ENCODE measurements at regions of chr1 and their contacts with region 1.

Region 1: GRCh38 chr1:209565759-209566678 is 17.5 kb upstream of the CAMK1G start:
- DNase-seq: peak; percentile 75 to 92
- H3K4me3 ChIP-seq: no peak overlapping the region
- H3K27ac ChIP-seq: no peak overlapping the region
- H3K4me1 ChIP-seq: peaks cover 0 to 4% (median 2%) of the 10 kb centered on the region in 4 experiments; a peak in 4 of 7 replicates
- H3K27me3 ChIP-seq: no peaks in the 10 kb centered on the region; a peak in 1 of 7 replicates
- CTCF ChIP-seq: peak; percentile 65 to 88 (median 76)
- EP300 ChIP-seq: no peak
- POLR2A ChIP-seq: no peak
- RAD21 ChIP-seq: peak; percentile 82 to 88

Region 2: DNA sequence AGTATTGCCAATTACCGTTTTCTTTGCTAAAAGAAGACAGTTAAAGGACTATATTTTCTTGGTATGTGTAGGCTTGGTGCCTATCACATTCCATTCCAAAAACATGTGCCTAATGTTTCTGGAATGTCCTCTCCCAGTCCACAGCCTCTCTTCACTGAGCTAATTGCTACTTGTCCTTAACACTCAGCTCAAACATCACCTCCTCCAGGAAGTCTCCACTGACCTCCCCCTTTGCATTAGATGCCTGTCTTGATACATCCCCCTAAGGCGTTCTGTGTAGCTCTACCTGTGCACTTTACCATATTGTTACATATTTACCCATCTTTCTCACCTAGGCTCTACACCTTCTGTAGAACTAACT is 178.1 kb before region 1 on chr1:
- CTCF ChIA-PET with region 1: no interaction called
- POLR2A ChIA-PET with region 1: no interaction called
- DNase-seq: no peak
- H3K4me3 ChIP-seq: no peak overlapping the region
- H3K27ac ChIP-seq: no peak overlapping the region
- H3K4me1 ChIP-seq: peaks cover 3 to 18% (median 13%) of the 10 kb centered on the region in 4 experiments; a peak in 3 of 7 replicates
- H3K27me3 ChIP-seq: no peaks in the 10 kb centered on the region
- CTCF ChIP-seq: no peak
- EP300 ChIP-seq: no peak
- POLR2A ChIP-seq: no peak
- RAD21 ChIP-seq: no peak

Region 3: DNA sequence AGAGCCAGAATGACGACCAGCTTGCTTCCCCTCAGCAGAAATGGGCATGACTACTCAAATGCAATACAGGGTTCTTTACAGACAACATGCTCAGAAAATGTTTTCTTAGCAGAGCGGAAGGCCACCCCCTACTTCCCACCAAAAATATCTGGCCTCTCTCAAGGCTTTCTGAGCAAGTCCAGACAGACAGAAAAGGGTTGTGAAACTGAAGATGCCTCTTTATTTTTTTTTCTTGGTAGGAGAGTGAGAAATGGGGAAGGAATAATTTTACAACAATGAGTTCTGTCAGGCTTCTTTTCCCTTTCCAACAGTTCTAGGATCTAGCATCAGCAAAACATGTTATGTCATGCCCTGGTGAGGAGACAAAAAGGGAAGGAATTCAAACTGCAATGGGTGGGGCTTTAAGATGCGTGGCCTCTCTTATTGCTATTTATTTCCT is 154.5 kb before region 1 on chr1:
- CTCF ChIA-PET with region 1: no interaction called
- POLR2A ChIA-PET with region 1: no interaction called
- DNase-seq: no peak
- H3K4me3 ChIP-seq: no peak overlapping the region
- H3K27ac ChIP-seq: no peak overlapping the region
- H3K4me1 ChIP-seq: peaks cover 4 to 11% (median 9%) of the 10 kb centered on the region in 4 experiments; a peak in 4 of 7 replicates
- H3K27me3 ChIP-seq: peaks cover 0 to 24% (median 11%) of the 10 kb centered on the region in 4 experiments; a peak in 4 of 7 replicates
- CTCF ChIP-seq: no peak
- EP300 ChIP-seq: no peak
- POLR2A ChIP-seq: no peak
- RAD21 ChIP-seq: no peak

Region 4: DNA sequence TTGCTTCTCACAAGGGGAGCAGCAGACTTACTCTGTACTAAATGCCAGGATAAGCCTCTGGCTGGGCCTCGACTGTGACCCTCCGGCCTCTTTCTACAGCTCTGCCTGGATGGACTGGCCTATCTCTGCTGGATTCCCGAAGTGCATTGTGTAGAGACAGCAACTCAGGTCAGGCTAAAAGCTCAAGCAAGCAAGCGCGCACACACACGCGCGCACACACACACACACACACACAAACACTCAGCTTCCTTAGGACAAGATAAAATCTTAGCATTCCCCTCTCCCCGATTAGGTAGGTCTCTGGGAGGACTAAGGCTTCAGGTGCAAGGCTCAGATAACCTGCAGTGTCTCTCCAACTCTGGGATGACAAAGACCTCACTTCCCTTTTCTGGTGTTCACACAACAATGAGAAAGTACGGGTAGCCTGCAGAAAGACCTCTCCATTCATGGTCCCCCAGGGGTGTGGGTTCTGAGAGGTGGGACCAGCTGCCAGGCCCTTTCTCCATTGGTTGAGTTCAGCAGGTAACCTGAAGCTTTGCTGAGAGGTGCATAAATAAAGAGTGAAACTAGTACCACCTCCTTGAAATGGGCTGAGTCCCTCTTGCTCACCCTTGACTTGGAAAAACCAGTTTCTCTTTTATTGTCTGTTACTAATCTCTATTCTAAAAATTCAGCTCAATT is 137.6 kb before region 1 on chr1:
- CTCF ChIA-PET with region 1: interaction called, 11 read pairs
- POLR2A ChIA-PET with region 1: no interaction called
- DNase-seq: peak in 1 of 2 experiments; percentile 62
- H3K4me3 ChIP-seq: peak overlapping the region in 2 of 4 experiments; percentile 11 to 49; a peak in 4 of 8 replicates
- H3K27ac ChIP-seq: peak overlapping the region; percentile 58
- H3K4me1 ChIP-seq: peaks cover 8 to 33% (median 32%) of the 10 kb centered on the region in 4 experiments
- H3K27me3 ChIP-seq: no peaks in the 10 kb centered on the region
- CTCF ChIP-seq: no peak
- EP300 ChIP-seq: no peak
- POLR2A ChIP-seq: peak in 1 of 2 experiments; percentile 57; a peak in 2 of 3 replicates
- RAD21 ChIP-seq: no peak

Region 5: GRCh38 chr1:209513226-209513625 is 52.8 kb before region 1 on chr1:
- CTCF ChIA-PET with region 1: interaction called, 32 read pairs
- POLR2A ChIA-PET with region 1: no interaction called
- DNase-seq: peak in 1 of 2 experiments; percentile 50
- H3K4me3 ChIP-seq: no peak overlapping the region
- H3K27ac ChIP-seq: no peak overlapping the region
- H3K4me1 ChIP-seq: no peaks in the 10 kb centered on the region
- H3K27me3 ChIP-seq: no peaks in the 10 kb centered on the region
- CTCF ChIP-seq: peak in 2 of 3 experiments; percentile 75 to 94; a peak in 3 of 4 replicates
- EP300 ChIP-seq: no peak
- POLR2A ChIP-seq: no peak
- RAD21 ChIP-seq: peak; percentile 90 to 94

Region 6: GRCh38 chr1:209549443-209550205 is 16.4 kb before region 1 on chr1:
- CTCF ChIA-PET with region 1: interaction called, 89 read pairs
- POLR2A ChIA-PET with region 1: no interaction called
- DNase-seq: no peak
- H3K4me3 ChIP-seq: no peak overlapping the region
- H3K27ac ChIP-seq: no peak overlapping the region
- H3K4me1 ChIP-seq: peaks cover 2 to 21% (median 12%) of the 10 kb centered on the region in 4 experiments; a peak in 5 of 7 replicates
- H3K27me3 ChIP-seq: peaks cover 0 to 5% (median under 1%) of the 10 kb centered on the region in 4 experiments; a peak in 3 of 7 replicates
- CTCF ChIP-seq: peak; percentile 52 to 65 (median 61)
- EP300 ChIP-seq: no peak
- POLR2A ChIP-seq: no peak
- RAD21 ChIP-seq: peak in 1 of 2 experiments; percentile 30; a peak in 1 of 4 replicates

Region 7: DNA sequence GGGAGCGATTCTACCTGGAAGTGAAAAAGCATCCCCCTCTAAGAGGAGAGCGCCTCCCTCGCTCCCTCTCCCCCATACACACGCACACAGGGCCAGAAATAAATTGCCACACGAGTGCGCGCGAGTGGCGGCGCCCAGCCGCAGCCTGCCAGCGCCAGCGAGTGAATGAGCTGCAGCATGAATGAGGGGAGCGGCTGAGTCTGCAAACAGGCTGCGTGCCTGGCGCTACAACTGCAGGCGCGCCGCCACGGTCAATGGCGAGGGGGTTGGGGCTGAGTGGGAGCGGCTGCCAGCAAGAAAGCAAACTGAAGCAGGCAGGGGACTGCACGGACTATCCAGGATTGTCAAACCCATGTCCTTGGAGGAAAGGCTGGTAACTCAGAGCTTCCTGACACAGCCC is 19.7 kb after region 1 on chr1:
- CTCF ChIA-PET with region 1: interaction called, 29 read pairs
- POLR2A ChIA-PET with region 1: interaction called, 3 read pairs
- DNase-seq: peak in 1 of 2 experiments; percentile 66
- H3K4me3 ChIP-seq: peak overlapping the region; percentile 22 to 45 (median 38); a peak in 7 of 8 replicates
- H3K27ac ChIP-seq: no peak overlapping the region
- H3K4me1 ChIP-seq: peaks cover 0 to 14% (median 9%) of the 10 kb centered on the region in 4 experiments; a peak in 5 of 7 replicates
- H3K27me3 ChIP-seq: peaks cover 0 to 27% (median 17%) of the 10 kb centered on the region in 4 experiments; a peak in 6 of 7 replicates
- CTCF ChIP-seq: no peak
- EP300 ChIP-seq: no peak
- POLR2A ChIP-seq: no peak
- RAD21 ChIP-seq: no peak

Region 8: DNA sequence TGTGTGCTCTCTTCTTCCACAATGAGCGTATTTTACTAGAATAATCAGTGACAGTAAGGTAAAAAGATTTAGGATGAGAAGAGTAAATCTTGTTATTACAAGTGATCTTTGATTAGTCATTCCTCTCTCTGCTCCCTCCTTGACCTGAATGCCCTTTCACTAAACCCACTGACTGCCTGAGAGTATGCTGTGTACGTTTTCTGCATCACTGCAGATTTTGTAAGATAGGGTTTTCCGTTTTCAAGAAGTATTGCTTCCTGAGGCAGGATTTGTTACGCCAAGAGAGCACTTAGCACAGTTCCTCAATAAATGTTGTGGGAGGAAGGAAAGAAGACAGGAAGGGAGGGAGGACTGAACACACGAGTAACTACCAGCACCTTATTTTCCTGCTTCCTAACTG is 93.9 kb after region 1 on chr1:
- CTCF ChIA-PET with region 1: no interaction called
- POLR2A ChIA-PET with region 1: no interaction called
- DNase-seq: no peak
- H3K4me3 ChIP-seq: no peak overlapping the region
- H3K27ac ChIP-seq: no peak overlapping the region
- H3K4me1 ChIP-seq: peaks cover 0 to 3% (median 0%) of the 10 kb centered on the region in 4 experiments; a peak in 2 of 7 replicates
- H3K27me3 ChIP-seq: 0 out of 7 replicates have a peak, but pooled peaks cover 0 to 2% (median 0%) of the 10 kb centered on the region in 4 experiments
- CTCF ChIP-seq: no peak
- EP300 ChIP-seq: no peak
- POLR2A ChIP-seq: no peak
- RAD21 ChIP-seq: no peak

Region 9: GRCh38 chr1:209692745-209693504 is 126.9 kb after region 1 on chr1:
- CTCF ChIA-PET with region 1: interaction called, 10 read pairs
- POLR2A ChIA-PET with region 1: no interaction called
- DNase-seq: peak in 1 of 2 experiments; percentile 82
- H3K4me3 ChIP-seq: no peak overlapping the region
- H3K27ac ChIP-seq: no peak overlapping the region
- H3K4me1 ChIP-seq: peaks cover 0 to 3% (median 0%) of the 10 kb centered on the region in 4 experiments; a peak in 1 of 7 replicates
- H3K27me3 ChIP-seq: no peaks in the 10 kb centered on the region; a peak in 2 of 7 replicates
- CTCF ChIP-seq: peak; percentile 47 to 90 (median 75)
- EP300 ChIP-seq: no peak
- POLR2A ChIP-seq: no peak
- RAD21 ChIP-seq: peak; percentile 94 to 95